ENCODE measurements at regions of chr13 and their contacts with region 1.

Region 1: GRCh38 chr13:31909864-31910551 is 121.6 kb upstream of the FRY start:
- DNase-seq: peak; percentile 68
- ATAC-seq: no peak
- H3K4me3 Mint-ChIP-seq: no peak overlapping the region
- H3K27ac Mint-ChIP-seq: no peak overlapping the region
- H3K4me1 Mint-ChIP-seq: peaks cover 4% of the 10 kb centered on the region
- H3K27me3 Mint-ChIP-seq: peaks cover 30% of the 10 kb centered on the region

Region 2: DNA sequence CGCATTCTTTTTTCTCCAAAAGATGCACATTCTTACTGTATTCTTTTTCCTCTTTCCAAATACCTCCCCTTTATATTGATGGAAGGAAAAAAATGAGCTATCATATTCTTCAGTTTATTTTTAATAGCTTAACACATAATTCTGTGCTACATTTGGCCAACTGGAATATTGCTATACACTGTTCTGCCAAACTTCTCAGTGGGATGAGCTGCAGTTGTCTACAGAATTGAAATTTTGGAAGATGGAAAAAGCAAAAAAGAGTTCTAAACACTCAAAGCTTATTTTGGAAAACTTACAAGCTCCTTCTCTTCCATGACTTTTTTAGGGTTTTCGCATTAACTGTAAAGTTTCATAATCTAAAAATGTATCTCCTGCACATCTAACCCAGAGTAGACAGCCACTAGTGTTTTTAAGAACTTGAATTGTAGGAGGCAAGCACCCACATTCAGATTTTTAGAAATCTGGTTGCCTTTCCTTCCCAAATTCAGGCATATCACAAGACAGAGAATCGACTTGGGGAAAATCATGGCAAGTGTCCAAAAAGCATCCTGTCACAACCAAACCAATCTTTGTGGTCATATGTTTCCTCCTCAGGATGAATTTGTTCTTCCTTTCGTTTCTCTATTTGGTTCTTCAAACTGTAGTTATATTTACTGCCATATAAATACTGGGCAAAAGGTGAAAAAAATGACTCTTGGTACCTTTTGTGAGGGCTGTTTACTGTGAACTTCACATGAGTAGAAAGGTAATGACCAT is 10.1 kb after region 1 on chr13:
- CTCF ChIA-PET with region 1: interaction called, 40 read pairs
- POLR2A ChIA-PET with region 1: interaction called, 3 read pairs
- DNase-seq: no peak
- ATAC-seq: no peak
- H3K4me3 Mint-ChIP-seq: no peak overlapping the region
- H3K27ac Mint-ChIP-seq: no peak overlapping the region
- H3K4me1 Mint-ChIP-seq: peaks cover 6% of the 10 kb centered on the region
- H3K27me3 Mint-ChIP-seq: peaks cover 12% of the 10 kb centered on the region

Region 3: DNA sequence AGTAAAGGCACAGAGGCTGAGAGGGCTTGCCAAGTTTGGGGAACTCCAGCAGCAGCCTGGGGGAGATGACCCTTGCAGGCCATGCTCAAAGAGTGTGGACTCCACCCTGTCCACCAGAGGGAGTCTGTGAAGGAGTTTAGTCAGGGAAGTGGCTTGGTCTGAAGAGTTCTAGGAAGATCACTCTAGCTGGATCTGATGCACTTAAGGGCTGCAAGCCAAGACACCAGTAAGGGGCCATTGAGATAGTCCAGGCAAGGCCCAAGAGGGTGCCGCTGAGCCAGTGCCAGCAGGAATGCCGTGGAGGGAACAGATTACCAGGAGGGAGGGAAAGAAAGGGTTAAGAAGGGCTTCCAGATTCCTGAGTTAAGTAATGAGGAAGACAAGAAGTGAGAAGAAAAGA is 336.5 kb after region 1 on chr13:
- CTCF ChIA-PET with region 1: interaction called, 12 read pairs
- POLR2A ChIA-PET with region 1: no interaction called
- DNase-seq: peak; percentile 58
- ATAC-seq: peak; percentile 79
- H3K4me3 Mint-ChIP-seq: no peak overlapping the region
- H3K27ac Mint-ChIP-seq: no peak overlapping the region
- H3K4me1 Mint-ChIP-seq: peaks cover 7% of the 10 kb centered on the region
- H3K27me3 Mint-ChIP-seq: no peaks in the 10 kb centered on the region

Region 4: DNA sequence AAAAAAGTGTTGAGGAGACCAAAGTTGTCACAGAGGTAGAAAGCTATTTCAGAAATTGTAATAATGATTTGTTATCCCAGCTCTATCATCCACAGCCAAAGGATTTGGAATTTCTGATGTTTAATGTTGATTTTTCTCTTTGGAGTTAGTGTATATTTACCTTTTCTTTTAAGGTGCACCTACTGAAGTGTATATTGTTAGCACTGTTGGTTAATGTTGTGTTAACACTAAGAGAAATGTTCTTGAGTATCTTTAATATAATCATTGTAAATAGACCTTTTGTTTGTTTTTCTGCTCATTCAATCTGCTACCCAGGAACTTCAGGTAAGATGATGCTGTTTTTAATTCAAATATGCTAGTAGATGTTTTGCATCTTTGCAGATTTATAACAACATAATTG is 347.6 kb after region 1 on chr13:
- CTCF ChIA-PET with region 1: no interaction called
- POLR2A ChIA-PET with region 1: no interaction called
- DNase-seq: no peak
- ATAC-seq: no peak
- H3K4me3 Mint-ChIP-seq: no peak overlapping the region
- H3K27ac Mint-ChIP-seq: no peak overlapping the region
- H3K4me1 Mint-ChIP-seq: no peaks in the 10 kb centered on the region
- H3K27me3 Mint-ChIP-seq: peaks cover 9% of the 10 kb centered on the region

Region 5: DNA sequence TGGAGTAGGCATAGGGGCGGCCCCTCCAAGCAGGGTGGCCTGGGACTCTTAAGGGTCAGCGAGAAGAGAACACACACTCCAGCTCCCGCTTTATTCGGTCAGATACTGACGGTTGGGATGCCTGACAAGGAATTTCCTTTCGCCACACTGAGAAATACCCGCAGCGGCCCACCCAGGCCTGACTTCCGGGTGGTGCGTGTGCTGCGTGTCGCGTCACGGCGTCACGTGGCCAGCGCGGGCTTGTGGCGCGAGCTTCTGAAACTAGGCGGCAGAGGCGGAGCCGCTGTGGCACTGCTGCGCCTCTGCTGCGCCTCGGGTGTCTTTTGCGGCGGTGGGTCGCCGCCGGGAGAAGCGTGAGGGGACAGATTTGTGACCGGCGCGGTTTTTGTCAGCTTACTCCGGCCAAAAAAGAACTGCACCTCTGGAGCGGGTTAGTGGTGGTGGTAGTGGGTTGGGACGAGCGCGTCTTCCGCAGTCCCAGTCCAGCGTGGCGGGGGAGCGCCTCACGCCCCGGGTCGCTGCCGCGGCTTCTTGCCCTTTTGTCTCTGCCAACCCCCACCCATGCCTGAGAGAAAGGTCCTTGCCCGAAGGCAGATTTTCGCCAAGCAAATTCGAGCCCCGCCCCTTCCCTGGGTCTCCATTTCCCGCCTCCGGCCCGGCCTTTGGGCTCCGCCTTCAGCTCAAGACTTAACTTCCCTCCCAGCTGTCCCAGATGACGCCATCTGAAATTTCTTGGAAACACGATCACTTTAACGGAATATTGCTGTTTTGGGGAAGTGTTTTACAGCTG is 405.4 kb after region 1 on chr13 and contains the starts of genes BRCA2 and ZAR1L:
- CTCF ChIA-PET with region 1: interaction called, 10 read pairs
- POLR2A ChIA-PET with region 1: interaction called, 3 read pairs
- DNase-seq: peak; percentile 93
- ATAC-seq: peak; percentile 92
- H3K4me3 Mint-ChIP-seq: peak within 1 kb of the TSS; percentile 89
- H3K27ac Mint-ChIP-seq: peak within 1 kb of the TSS; percentile 99
- H3K4me1 Mint-ChIP-seq: peaks cover 41% of the 10 kb centered on the region
- H3K27me3 Mint-ChIP-seq: no peaks in the 10 kb centered on the region
- total RNA-seq, gene BRCA2: 28.4 to 30.7 TPM
- total RNA-seq, gene ZAR1L: not detected